Sigmoid colon (tissue), 7 donors: ENCODE measurements at regions of chr12 and their contacts with region 1.

Region 1: DNA sequence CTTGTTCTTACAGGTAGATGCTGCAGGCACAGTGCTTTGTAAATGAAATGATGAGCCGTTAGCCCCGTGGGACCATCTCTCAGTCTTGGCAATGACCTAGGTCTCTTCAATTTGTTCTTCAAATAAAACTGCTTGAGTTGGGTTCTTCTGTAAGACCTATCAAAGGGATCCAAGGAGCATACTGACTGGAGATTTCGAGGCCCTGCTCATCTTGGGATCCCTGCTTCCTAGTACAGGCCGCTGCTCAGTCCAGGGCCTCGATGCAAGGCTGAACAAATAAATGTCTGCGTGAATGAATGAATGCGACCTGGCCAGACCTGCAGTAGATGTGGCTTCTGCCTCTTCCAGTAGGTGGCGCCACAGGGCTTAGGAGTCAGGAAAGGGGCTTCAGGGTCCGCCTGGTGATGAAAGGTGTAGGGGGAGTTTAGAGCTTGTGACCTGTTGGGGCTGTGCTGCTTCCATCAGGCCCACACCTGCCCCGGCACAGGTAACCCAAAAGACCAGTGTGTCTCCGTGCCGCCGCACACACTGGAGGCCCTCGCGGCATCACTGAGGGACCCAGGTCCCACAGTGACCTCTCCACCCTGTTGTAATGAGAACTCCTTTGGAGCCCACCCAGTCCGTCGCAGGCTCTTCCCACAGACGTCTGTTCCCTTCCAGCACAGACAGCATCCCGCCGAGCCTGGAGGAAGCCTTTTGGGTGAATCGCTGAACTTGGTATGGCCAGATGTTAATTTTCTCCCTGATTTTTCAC is 4.4 kb downstream of the CACNA1C start:
- DNase-seq: peak; percentile 90
- H3K4me3 ChIP-seq: peak overlapping the region; percentile 15 to 92 (median 45)
- H3K27ac ChIP-seq: peak overlapping the region; percentile 80 to 98 (median 97)
- H3K4me1 ChIP-seq: peaks cover 0 to 64% (median 57%) of the 10 kb centered on the region in 4 donors
- H3K27me3 ChIP-seq: no peaks in the 10 kb centered on the region
- CTCF ChIP-seq: peak; percentile 79 to 90 (median 83)
- EP300 ChIP-seq: no peak
- POLR2A ChIP-seq: no peak

Region 2: DNA sequence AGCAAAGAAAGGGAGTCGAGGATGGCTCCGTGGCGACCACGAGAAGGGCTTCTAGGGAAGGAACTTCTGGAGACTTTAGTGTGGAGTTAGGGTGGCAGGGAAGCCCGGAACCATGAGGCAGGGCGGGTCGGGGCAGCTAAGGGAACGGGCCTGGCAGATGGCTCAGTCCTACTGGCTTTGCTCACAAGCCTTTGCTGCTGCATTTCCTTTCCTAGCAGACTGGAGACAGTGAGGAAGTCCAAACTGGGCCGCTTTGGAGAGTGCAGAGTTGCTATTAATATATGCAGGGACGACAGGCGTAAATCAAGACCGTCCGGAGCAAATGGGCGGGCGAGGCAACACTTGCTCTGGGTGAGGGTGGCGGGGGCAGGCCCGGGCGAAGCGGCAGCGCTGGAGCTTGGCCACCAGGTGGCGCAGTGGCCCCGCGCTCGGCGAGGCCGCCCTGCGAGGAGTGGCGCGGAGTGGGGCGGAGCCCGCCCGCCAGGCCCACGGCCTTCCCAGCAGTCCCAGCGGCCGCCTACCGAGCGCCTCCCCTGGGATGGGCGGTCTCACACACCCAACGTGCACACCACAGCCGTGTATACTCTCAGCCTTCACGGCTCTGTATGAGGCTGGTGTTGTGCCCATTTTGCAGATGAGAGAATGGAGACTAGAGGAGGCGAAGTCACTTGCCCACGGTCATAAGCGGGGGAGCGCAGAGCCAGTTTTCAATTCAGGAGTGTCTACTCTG is 261.3 kb before region 1 on chr12:
- intact Hi-C with region 1: loop called (anchors 5 kb)
- DNase-seq: peak; percentile 96
- H3K4me3 ChIP-seq: peak overlapping the region; percentile 34 to 64 (median 58)
- H3K27ac ChIP-seq: peak overlapping the region; percentile 78 to 86 (median 84)
- H3K4me1 ChIP-seq: peaks cover 0 to 40% (median 31%) of the 10 kb centered on the region in 4 donors
- H3K27me3 ChIP-seq: no peaks in the 10 kb centered on the region
- CTCF ChIP-seq: peak; percentile 74 to 95 (median 83)
- EP300 ChIP-seq: peak in 1 of 4 donors; percentile 42
- POLR2A ChIP-seq: peak in 1 of 2 donors; percentile 67

Region 3: GRCh38 chr12:2163172-2163941 is 106.1 kb after region 1 on chr12:
- intact Hi-C with region 1: loop called (anchors 5 kb)
- DNase-seq: peak; percentile 95
- H3K4me3 ChIP-seq: no peak overlapping the region
- H3K27ac ChIP-seq: peak overlapping the region; percentile 76 to 89 (median 80)
- H3K4me1 ChIP-seq: peaks cover 0 to 85% (median 73%) of the 10 kb centered on the region in 4 donors
- H3K27me3 ChIP-seq: no peaks in the 10 kb centered on the region
- CTCF ChIP-seq: no peak
- EP300 ChIP-seq: no peak
- POLR2A ChIP-seq: no peak

Region 4: DNA sequence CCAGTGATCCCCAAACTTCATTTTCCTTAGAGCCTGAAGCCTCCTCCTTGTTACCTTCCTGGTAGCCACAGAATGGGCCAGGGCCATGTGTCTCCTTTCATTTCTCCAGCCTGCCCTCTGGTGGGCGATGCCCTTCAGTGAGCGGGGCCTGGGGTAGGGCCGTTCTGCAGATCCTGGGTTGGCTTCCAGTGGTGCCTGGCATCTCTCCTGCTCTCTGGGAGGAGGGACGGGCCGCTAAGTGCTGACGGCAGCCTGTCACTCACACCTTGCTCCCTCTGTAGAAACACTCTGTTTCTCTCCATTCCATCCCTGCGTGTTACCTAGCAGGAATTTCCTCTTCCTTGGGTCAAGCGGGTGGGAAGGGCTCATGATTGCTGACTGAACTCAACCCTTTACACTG is 227.6 kb after region 1 on chr12:
- intact Hi-C with region 1: loop called (anchors 5 kb)
- DNase-seq: peak; percentile 84
- H3K4me3 ChIP-seq: no peak overlapping the region
- H3K27ac ChIP-seq: peak overlapping the region; percentile 77 to 89 (median 84)
- H3K4me1 ChIP-seq: peaks cover 0 to 84% (median 81%) of the 10 kb centered on the region in 4 donors
- H3K27me3 ChIP-seq: no peaks in the 10 kb centered on the region
- CTCF ChIP-seq: peak; percentile 38 to 68 (median 58)
- EP300 ChIP-seq: no peak
- POLR2A ChIP-seq: no peak

Region 5: DNA sequence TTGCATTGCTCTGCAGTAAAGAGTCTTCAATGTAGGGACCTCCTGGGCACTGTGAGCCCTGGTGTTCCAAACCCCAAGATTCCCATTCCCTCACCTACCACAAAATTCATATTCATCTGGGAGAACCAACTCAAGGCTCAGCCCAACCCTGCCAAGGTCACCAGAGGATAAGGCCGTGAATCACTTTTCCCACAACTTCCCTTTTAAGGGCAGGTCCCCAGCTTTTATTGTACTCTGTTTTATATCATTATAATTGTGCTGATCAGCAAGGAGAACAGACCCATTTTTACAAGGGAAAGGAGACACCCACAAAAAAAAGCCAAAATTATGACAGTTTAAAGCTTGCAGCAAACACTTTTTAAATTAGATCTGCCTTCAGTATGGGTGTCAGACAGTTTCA is 374.6 kb after region 1 on chr12:
- intact Hi-C with region 1: loop called (anchors 10 kb)
- DNase-seq: peak; percentile 88
- H3K4me3 ChIP-seq: no peak overlapping the region
- H3K27ac ChIP-seq: peak overlapping the region in 3 of 4 donors; percentile 86 to 94 (median 86)
- H3K4me1 ChIP-seq: peaks cover 0 to 94% (median 85%) of the 10 kb centered on the region in 4 donors
- H3K27me3 ChIP-seq: no peaks in the 10 kb centered on the region
- CTCF ChIP-seq: no peak
- EP300 ChIP-seq: peak; percentile 87 to 98 (median 95)
- POLR2A ChIP-seq: no peak

Region 6: DNA sequence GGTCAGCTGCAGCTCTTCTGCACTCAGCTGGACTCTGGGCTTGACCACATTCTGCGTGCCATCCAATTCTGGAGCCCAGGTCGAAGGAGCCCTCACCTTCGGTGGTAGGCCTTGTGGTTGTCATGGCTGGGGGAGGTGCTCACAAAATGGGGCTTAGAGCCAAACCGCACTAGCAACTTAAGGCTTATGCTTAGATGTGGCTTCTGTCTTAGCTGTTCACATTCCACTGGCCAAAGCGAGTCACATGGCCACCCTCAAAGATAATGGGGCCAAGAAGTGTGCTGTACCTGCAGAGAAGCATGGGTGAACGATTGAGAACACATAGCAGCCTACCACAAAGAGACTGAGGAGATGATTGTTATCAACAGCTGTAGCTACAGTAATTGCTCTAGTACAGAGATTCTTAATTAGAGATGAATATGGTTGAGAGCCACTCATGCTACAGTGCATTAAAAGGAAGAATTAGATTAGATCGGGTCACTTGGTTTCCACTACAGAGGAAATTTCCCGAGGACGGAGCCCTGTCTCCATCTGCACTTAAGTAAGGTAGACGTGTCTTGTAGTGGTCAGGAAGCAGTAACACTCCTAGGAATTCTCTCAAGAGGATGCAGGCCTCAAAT is 402.9 kb after region 1 on chr12:
- intact Hi-C with region 1: no loop called
- DNase-seq: peak; percentile 43
- H3K4me3 ChIP-seq: no peak overlapping the region
- H3K27ac ChIP-seq: no peak overlapping the region
- H3K4me1 ChIP-seq: peaks cover 0 to 4% (median 0%) of the 10 kb centered on the region in 4 donors
- H3K27me3 ChIP-seq: no peaks in the 10 kb centered on the region
- CTCF ChIP-seq: no peak
- EP300 ChIP-seq: no peak
- POLR2A ChIP-seq: no peak